Activated CD4-positive, alpha-beta T cell treated with anti-CD3 and anti-CD28 coated beads for 36 hours (primary cell): ENCODE measurements at regions of chr1 and their contacts with region 1.

Region 1: GRCh38 chr1:235855811-235856429 is 10.8 kb downstream of the LYST start:
- DNase-seq: no peak
- ATAC-seq: peak; percentile 62
- H3K4me3 Mint-ChIP-seq: no peak overlapping the region
- H3K27ac Mint-ChIP-seq: peak overlapping the region; percentile 84
- H3K4me1 Mint-ChIP-seq: peaks cover 54% of the 10 kb centered on the region
- H3K27me3 Mint-ChIP-seq: no peaks in the 10 kb centered on the region

Region 2: GRCh38 chr1:235697508-235697907 is 158.4 kb before region 1 on chr1:
- CTCF ChIA-PET with region 1: no interaction called
- POLR2A ChIA-PET with region 1: no interaction called
- intact Hi-C with region 1: loop called in 1 of 2 experiments (anchors 5 kb)
- DNase-seq: no peak
- ATAC-seq: peak; percentile 100
- H3K4me3 Mint-ChIP-seq: no peak overlapping the region
- H3K27ac Mint-ChIP-seq: peak overlapping the region; percentile 85
- H3K4me1 Mint-ChIP-seq: peaks cover 17% of the 10 kb centered on the region
- H3K27me3 Mint-ChIP-seq: no peaks in the 10 kb centered on the region

Region 3: GRCh38 chr1:235873045-235873444 is 17.1 kb after region 1 on chr1:
- CTCF ChIA-PET with region 1: interaction called, 17 read pairs
- POLR2A ChIA-PET with region 1: interaction called, 7 read pairs
- intact Hi-C with region 1: loop called (anchors 2 kb)
- DNase-seq: peak; percentile 50
- ATAC-seq: peak; percentile 62
- H3K4me3 Mint-ChIP-seq: peak overlapping the region; percentile 57
- H3K27ac Mint-ChIP-seq: peak overlapping the region; percentile 98
- H3K4me1 Mint-ChIP-seq: peaks cover 69% of the 10 kb centered on the region
- H3K27me3 Mint-ChIP-seq: no peaks in the 10 kb centered on the region

Region 4: GRCh38 chr1:235888119-235888643 is 32.3 kb after region 1 on chr1:
- CTCF ChIA-PET with region 1: interaction called, 4 read pairs
- POLR2A ChIA-PET with region 1: interaction called, 3 read pairs
- intact Hi-C with region 1: loop called (anchors 1 kb)
- DNase-seq: peak; percentile 78
- ATAC-seq: peak; percentile 88
- H3K4me3 Mint-ChIP-seq: peak overlapping the region; percentile 6
- H3K27ac Mint-ChIP-seq: peak overlapping the region; percentile 84
- H3K4me1 Mint-ChIP-seq: peaks cover 41% of the 10 kb centered on the region
- H3K27me3 Mint-ChIP-seq: no peaks in the 10 kb centered on the region

Region 5: DNA sequence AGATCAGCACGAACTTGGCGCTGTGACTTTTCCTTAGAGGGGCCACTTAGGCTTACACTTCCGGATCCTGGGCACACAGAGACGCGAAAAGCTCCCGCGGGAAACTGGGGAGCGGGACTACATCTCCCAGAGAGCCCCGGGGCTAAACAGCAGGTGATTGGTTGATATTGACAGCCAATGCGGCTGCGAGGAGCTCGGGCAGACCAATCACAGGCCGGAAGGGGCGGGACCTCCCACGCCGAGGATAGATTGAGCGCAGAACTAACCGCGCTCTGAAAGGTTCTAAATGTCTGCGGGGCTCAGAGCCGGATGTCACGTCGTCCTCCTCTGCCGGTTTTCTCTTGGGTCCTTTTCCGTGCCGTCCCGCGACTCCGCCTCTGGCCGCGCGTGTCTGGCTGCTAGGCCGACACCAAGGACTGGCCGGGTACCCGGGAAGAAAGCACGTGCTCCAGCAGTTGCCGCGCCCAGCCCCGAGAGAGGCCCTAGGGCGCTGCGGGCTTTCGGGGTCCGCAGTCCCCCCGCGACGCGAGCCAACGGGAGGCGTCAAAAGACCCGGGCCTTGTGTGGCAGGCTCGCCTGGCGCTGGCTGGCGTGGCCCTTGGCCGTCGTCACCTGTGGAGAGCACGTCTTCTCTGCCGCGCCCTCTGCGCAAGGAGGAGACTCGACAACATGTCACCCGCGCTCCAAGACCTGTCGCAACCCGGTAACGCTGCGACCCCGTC is 939.3 kb after region 1 on chr1 and contains the start of gene MTR:
- CTCF ChIA-PET with region 1: no interaction called
- POLR2A ChIA-PET with region 1: no interaction called
- intact Hi-C with region 1: loop called in 1 of 2 experiments (anchors 5 kb)
- DNase-seq: peak; percentile 98
- ATAC-seq: peak; percentile 95
- H3K4me3 Mint-ChIP-seq: peak within 1 kb of the TSS; percentile 97
- H3K27ac Mint-ChIP-seq: peak within 1 kb of the TSS; percentile 100
- H3K4me1 Mint-ChIP-seq: peaks cover 33% of the 10 kb centered on the region
- H3K27me3 Mint-ChIP-seq: peaks cover 2% of the 10 kb centered on the region
- total RNA-seq, gene MTR: 57.3 to 64.8 TPM